ENCODE measurements at regions of chr16 and their contacts with region 1.

Region 1: DNA sequence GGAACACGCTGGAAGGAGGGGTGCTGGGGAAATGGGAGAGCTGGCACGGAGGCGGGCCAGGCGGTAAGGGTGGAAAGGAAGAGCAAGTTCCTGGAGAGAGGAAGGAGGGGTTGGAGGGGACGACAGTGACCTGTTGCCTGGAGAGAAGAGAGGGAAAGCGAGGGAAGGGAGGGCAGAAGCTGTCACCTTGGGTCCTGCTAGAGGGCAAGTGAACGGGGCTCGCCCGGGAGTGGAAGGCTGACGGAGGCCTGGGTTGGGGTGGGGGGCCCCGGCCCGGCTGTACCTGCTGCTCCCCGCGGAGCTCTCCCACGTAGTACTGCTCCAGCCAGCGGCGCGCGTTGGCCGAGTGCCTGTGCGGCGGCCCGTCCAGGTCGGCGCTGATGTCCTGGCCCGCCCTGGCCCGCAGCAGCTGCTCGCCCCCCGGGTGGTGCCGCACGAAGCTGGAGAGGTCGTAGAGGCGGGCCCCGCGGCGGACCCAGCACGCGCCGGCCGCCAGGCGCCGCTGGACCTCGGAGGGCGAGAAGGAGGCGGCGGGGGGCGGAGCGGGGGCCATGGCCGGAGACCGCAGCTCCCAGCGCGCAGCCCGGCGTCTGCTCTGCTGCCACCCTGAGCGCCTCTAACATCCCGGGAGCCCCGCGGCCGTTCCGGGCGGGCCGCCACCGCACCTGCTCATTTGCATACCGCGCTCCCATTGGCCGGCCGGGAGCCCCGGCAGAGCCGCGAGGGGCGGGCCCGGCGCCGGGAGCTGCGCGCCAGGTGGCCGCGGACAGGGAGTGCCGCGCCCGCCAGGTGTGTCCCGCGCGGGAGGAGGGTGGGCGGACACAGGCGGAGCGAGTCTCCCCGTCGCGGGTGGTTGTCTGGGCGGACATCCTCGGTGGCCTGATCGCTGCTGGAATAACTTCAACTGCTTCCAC is at the start of gene FA2H:
- DNase-seq: peak; percentile 82 to 99 (median 89)

Region 2: DNA sequence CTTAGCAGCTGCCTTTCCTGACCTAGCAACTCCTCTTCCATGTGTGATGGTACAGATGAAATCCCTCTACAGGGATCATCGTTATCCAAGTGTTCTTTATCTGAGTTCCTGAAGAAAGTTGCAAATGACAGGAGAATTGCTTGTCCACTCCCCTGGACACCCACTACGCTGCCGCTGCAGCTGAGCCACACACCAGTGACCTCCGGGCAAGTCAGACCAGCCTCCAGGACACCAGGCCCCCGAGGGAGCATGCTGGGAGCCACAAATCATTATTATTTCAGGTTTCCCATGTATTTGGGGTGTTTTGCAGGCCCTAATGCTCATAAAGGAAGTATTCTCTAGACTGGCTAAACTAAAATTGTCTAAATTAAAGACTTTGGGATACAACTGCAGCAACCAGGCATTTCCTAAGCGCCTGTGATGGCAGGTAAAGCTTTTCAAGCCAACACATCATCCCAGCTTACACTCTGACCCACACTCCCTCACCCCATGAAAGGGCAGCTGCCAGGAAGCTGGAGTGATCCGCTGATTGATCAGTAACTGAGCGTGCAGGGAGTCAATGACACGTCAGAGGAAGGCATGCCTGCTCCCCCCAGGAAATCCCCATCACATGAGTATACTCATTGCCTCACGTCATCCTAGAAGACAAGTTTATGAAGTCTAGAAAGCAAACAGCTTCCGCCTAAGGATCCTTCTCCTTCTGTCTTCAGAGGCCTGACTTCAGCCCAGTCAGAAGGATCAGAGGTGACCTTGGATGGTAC is 14.3 kb before region 1 on chr16:
- intact Hi-C with region 1: loop called (anchors 2 kb)
- DNase-seq: peak in 2 of 10 donors; percentile 28 to 44

Measured in posterior cingulate gyrus (tissue), 11 donors.